Cardiac septum (tissue), 1 donor: ENCODE measurements at regions of chr17 and their contacts with region 1.

Region 1: GRCh38 chr17:42101513-42102319 is 3.4 kb upstream of the ZNF385C start:
- DNase-seq: no peak

Region 2: DNA sequence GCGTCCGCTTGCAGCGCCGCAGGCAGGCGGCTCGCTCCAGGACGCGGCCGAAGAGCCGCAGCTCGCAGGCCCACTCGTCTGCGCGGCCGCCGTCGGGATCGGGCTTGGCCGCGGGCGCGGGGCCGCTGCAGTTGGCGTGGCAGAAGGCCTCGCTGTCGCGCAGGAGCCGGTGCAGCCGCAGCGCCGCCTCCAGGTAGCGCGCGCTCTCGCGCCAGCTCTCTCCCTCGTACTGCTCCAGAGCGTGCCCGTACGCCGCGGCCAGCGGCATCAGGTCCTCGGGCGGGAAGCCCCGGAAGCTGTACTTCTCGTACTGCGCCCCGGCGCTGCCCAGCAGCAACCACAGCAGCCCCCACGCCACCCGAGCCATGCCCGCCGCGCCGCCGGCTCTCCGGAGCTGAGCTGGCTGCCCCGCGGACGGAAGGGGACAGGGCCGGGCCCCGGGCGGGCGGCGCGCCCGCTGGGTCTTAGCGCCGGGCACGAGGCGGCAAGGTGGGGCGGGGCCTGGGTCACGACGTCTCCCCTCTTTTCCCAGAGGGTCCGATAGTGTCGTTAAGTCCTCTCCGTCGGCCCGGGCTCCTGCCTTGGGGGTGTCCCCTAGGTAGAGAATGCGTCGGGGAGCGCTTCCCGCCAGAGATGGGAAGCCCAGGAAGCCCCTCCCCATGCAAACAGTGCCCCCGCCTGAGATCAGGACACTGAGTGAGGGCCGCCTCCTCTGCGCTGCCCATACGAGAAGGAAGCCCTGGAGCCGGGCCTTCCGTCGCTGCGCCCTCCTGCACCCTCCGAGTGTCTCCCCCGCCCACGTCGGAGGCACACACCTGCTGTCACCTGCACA is 290.0 kb before region 1 on chr17 and contains the start of gene P3H4:
- intact Hi-C with region 1: no loop called
- DNase-seq: peak; percentile 83
- total RNA-seq, gene P3H4: 5.1 TPM

Region 3: GRCh38 chr17:42067351-42068091 is 34.2 kb before region 1 on chr17:
- intact Hi-C with region 1: loop called (anchors 5 kb)
- DNase-seq: peak; percentile 81

Region 4: GRCh38 chr17:42183741-42184711 is 82.3 kb after region 1 on chr17:
- intact Hi-C with region 1: no loop called
- DNase-seq: peak; percentile 84